Left cardiac atrium (tissue), 4 donors: ENCODE measurements at regions of chr1 and their contacts with region 1.

Region 1: GRCh38 chr1:19113697-19114092 is 96.4 kb downstream of the UBR4 start:
- DNase-seq: no peak
- ATAC-seq: peak; percentile 21 to 33

Region 2: DNA sequence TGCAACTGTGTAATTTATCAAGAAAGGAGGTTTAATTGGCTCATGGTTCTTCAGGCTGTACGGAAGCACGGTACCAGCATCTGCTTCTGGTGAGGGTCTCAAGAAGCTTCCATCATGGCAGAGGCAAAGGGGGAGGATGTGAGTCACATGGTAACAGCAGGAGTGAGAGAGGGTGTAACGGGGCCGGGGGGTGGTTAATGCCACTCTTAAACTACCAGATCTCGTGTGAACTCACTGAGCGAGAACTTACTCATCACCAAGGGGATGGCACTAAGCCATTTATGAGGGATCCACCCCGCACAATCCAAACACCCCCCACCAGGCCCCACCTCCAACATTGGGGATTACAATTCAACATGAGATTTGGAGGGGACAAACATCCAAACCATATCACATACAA is 136.3 kb before region 1 on chr1:
- intact Hi-C with region 1: no loop called
- DNase-seq: no peak
- ATAC-seq: no peak

Region 3: DNA sequence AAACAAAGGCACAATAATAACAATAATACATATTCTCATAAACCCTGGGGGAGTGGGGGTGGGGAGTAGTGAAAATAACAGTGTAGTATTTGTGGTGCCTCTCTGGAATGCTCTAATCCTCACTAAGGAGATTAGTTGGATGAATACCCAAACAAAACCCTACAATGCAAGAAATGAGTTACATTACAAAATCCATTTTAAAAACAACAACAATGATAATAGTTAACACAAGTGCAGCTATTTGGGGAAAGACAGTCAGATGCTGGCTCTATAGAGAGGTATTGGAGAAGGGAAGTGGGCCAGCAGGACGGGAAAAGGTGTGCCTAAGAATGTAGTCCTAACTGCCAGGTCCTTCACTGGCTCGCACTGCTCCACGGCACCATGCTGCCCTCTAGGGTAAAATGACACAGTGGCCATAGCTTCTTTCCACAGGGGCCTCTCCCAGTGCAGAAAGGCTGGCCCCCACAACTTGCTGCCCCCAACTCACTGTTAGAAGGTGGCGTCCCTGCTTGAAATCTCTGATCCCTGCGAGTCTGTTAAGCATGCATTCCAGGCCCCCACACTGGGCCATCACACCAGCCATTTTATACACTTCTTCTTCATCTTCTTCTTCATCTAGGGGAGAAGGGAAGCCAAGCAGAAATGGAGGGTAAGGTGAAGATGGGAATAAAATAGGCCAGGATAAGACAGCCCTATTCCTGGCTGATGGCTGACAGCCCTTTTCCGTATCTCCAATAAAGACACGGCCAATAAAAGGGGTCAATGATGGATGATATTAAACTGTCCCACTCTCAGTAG is 17.5 kb before region 1 on chr1:
- intact Hi-C with region 1: no loop called
- DNase-seq: peak; percentile 44
- ATAC-seq: peak; percentile 76 to 83

Region 4: GRCh38 chr1:19153169-19153568 is 39.5 kb after region 1 on chr1:
- intact Hi-C with region 1: loop called in 1 of 2 experiments (anchors 5 kb)
- DNase-seq: no peak
- ATAC-seq: no peak